Right cardiac atrium (tissue), 5 donors: ENCODE measurements at regions of chr2 and their contacts with region 1.

Region 1: GRCh38 chr2:168948621-168949212 is 47.6 kb downstream of the G6PC2 start:
- DNase-seq: no peak
- ATAC-seq: no peak
- H3K4me3 ChIP-seq: no peak overlapping the region
- H3K27ac ChIP-seq: no peak overlapping the region
- H3K4me1 ChIP-seq: no peaks in the 10 kb centered on the region
- H3K27me3 ChIP-seq: no peaks in the 10 kb centered on the region

Region 2: DNA sequence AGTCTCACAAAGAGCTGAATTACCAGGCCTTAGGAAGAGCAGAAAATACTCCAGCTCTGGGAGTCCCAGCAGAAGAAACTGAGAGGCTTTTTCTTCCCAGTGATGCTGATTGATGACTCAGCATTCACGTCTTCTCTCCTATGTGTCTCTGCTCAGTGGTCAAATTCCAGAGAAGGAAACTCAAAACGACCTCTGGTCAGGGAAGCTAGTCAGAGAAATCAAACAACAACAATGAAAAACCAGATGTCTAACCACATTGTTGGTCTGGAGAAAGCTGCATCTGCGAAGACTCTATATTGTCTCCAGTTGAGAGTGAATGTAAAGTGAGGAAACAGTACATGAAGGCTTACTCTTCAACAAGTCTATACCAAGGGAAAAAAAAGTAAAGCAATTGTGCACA is 521.3 kb before region 1 on chr2:
- intact Hi-C with region 1: no loop called
- DNase-seq: no peak
- ATAC-seq: no peak
- H3K4me3 ChIP-seq: no peak overlapping the region
- H3K27ac ChIP-seq: no peak overlapping the region
- H3K4me1 ChIP-seq: no peaks in the 10 kb centered on the region
- H3K27me3 ChIP-seq: no peaks in the 10 kb centered on the region

Region 3: GRCh38 chr2:169080250-169081069 is 131.7 kb after region 1 on chr2:
- intact Hi-C with region 1: no loop called
- DNase-seq: no peak
- ATAC-seq: peak in 1 of 2 donors; percentile 17
- H3K4me3 ChIP-seq: no peak overlapping the region
- H3K27ac ChIP-seq: no peak overlapping the region
- H3K4me1 ChIP-seq: peaks cover 3% of the 10 kb centered on the region
- H3K27me3 ChIP-seq: no peaks in the 10 kb centered on the region

Region 4: DNA sequence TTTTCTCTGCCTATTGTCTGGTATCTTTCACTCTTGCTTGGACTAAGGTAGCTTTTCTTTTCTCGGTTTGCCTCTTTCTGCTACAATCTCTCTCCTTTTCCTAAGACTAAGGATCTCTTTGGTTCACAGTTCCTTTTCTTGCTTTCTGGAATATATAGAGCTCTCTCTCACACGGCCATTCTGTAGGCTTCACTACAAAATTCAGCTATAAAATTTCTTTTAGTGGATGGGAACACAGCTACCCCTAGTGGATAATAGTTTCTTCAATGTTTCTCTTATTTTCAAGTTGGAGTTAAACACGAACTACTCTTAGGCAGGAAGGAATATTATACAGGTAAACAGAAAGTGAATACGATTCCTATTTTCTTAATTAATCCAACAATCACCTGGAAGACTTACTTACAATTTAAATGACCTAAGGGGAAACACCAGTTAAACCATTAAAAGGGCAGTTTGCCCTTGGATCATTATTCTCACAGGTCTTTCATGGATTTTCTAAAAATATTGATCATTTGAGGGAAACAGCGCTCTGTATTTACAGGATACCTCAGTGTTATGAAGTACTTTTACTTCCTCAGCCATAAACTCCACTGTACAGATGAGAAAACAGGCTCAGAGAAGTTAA is 273.1 kb after region 1 on chr2:
- intact Hi-C with region 1: loop called in 1 of 4 experiments (anchors 10 kb)
- DNase-seq: no peak
- ATAC-seq: no peak
- H3K4me3 ChIP-seq: no peak overlapping the region
- H3K27ac ChIP-seq: no peak overlapping the region
- H3K4me1 ChIP-seq: no peaks in the 10 kb centered on the region
- H3K27me3 ChIP-seq: no peaks in the 10 kb centered on the region